ENCODE measurements at regions of chr1 and their contacts with region 1.

Region 1: DNA sequence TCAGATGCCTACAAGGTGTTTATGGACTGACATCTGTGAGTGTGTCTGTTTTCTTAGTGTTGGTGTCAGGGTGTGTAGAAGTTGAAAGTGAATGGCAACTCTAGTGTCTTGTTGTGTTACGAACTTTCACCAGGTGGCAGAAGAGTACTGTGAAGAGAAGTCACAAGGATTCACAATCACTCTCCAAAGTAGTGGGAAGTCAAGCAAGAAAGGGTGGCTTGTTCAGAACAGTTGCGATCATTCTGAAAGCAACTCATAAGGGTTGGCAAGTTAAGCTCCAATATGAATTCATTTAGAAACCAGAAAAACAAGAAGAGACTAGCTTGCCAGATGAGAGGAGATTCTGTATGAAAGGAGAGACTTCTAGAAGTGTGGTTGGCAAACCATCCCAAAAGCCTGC is 86.1 kb downstream of the FASLG start:
- DNase-seq: peak; percentile 33
- H3K4me3 ChIP-seq: no peak overlapping the region
- H3K27me3 ChIP-seq: peaks cover 2% of the 10 kb centered on the region; the same call in 1 of the 2 replicates
- CTCF ChIP-seq: peak; percentile 67

Region 2: DNA sequence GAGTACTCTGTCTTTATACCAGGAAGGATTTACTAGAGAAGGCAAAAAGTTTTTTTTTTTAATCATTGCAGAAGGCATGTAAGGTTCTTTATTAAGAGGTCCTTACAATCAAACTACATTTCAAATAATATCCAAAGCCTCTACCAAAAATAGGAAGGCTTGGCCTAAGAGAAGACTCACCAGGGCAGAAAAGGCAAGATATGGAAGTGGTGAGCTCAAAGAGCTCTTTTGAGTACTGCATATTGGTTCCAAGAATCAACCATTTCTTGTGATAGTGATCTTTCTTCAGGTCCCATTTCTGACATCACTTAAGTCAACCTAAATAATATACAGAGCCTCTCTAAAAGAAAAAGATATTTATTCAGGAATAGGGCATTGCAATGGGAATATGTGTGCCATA is 67.1 kb after region 1 on chr1:
- CTCF ChIA-PET with region 1: interaction called, 7 read pairs
- POLR2A ChIA-PET with region 1: interaction called, 10 read pairs
- DNase-seq: no peak
- H3K4me3 ChIP-seq: no peak overlapping the region
- H3K27me3 ChIP-seq: no peaks in the 10 kb centered on the region
- CTCF ChIP-seq: no peak

Region 3: DNA sequence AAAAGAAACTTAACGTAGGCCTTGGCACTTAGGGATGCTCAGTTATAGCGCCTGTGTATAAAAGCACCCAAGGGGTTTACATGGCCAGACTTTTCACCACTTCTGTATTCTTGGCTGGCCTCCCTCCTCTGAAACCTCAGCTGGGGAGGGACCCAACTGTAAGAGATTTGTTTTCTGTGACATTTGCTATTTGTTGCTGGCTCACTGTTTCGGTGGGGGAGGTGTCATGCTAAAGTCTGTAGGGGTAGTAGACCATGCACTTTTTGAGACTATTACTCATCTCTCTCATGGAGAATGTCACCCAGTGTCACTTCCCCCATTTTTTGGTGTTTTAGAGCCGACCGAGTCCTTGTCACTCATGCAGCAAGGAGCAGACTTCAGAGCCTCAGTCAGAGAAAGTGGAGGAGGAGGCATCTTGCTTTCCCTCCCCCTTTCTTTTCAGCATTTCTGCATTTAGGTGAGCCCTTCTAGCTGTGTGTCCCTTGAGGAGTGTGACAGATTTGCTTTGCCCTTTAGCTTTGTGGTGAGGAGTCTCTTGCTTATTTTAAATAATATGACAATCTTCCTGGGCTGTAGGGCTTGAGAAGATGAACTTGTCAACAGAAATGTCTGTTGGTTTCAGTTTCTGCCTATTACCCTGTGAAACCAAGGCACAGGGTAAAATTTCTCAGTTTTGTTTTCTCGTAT is 74.0 kb after region 1 on chr1:
- CTCF ChIA-PET with region 1: interaction called, 59 read pairs
- POLR2A ChIA-PET with region 1: no interaction called
- DNase-seq: no peak
- H3K4me3 ChIP-seq: no peak overlapping the region
- H3K27me3 ChIP-seq: no peaks in the 10 kb centered on the region
- CTCF ChIP-seq: no peak

Region 4: DNA sequence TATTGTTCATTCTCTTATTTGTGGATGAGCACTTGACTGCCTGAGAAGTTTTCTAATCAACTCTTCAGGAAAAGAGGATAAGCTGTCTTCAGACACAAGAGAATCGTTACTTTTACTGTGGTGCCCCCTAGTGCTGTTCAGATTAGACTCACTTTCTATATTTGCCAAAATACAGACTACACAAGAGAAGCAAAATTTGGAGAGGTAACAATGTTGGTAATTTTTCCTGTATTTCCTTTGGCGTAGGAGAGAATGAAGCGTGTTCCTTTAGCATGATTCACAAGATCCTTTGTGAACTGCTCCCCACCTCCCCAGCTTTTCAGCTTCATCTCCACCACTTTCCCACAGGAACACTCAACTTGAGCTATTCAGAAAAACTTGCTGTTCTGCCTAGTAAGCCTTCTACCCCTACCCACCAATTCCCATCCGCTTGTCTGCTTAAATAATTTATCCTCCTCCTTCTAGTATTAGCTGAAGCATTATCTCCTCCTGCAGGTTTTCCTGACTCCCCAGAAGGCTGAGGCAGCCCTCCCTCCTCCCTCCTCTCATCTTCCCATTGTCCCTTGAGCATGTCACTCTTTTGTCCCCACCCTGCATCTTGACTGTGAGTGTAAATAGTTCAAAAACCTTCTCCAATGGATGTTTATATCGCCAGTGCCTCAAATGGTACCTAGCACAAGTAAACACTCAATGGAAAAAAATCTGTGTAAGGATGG is 457.6 kb after region 1 on chr1:
- CTCF ChIA-PET with region 1: interaction called, 90 read pairs
- POLR2A ChIA-PET with region 1: interaction called, 3 read pairs
- DNase-seq: peak; percentile 77
- H3K4me3 ChIP-seq: no peak overlapping the region
- H3K27me3 ChIP-seq: no peaks in the 10 kb centered on the region
- CTCF ChIP-seq: peak; percentile 67

Region 5: DNA sequence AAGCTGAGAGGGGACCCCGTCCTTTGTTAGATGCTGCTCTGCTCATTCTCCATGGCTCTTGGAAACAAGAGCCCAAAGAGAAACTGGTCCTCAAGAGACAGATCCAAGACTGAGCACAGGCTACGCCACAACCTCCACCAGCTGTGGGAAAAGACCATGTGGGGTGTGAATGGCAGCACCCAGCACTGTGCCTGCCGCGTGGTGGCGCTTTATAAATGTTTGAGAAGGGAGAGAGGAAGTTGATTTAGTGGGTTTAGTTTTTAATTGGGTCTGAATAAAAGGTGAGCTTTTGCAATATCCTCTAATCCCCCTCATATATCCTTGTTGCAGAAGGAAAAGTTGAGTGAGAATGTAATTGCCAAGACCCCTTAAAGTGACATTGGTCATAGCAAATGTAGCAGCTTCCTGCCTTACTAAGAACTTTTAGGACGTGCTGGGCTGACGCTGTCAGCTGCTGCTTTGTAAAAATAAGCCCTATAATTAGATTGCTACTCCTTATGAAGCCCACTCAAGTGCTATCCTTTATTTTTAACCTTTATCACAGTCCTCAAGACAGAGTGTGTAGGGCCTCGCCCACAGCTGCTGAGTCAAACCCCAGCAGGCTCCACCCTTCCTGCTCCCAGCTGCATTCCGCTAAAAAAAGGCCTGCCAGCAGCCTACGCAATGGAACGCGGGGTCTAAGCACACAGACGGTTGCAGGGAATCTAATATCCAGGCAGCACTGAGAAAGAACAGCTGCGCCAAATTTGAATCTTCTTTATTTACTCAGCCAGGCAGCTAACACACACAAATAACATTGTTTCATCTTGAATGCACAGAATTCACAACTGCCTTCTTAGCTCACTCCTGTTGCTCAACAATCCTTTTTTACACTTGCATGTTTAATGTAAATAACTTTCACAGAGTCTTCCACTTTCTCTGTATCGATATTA is 684.7 kb after region 1 on chr1:
- CTCF ChIA-PET with region 1: interaction called, 11 read pairs
- POLR2A ChIA-PET with region 1: no interaction called
- DNase-seq: peak; percentile 80
- H3K4me3 ChIP-seq: no peak overlapping the region
- H3K27me3 ChIP-seq: no peaks in the 10 kb centered on the region
- CTCF ChIP-seq: peak; percentile 69